CD14-positive monocyte (primary cell): ENCODE measurements at regions of chr9 and their contacts with region 1.

Region 1: DNA sequence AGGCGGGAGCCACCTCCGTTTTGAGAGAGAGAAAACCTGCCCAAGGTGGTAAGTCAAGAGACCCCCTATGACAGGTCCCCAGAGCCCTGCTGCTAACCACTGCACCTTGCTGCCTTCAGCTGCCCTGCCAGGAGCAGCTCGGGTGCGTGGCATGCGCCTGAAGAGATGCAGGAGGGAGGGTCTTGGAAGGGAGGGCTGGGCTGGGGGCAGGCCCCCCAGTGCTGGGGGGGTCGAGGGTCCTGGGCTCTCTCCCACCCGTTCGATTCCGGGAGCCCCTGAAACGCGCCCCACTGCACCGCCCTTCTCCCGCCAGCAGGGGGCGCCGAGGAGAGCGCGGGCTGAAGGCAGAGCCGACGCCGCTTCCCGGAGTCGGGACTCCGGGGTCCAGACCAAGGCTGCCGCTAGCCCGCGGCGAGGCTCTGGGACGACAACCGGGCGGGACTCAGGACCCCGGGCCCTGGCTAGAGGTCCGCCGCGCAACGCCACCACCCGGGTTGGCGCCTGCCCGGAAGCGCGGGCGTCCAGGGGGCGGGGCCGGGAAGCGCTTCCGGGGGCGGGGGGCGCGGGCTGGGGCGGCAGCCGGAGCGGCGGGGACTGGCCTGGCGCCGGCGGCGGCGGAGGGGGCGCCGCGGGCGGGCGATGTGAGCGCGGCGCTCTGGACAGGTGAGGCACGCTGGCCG is at the start of gene ZBTB34:
- DNase-seq: peak; percentile 45 to 57 (median 48)
- H3K4me3 ChIP-seq: peak within 1 kb of the TSS; percentile 86 to 93 (median 87)
- H3K4me3 Mint-ChIP-seq: peak within 1 kb of the TSS; percentile 89 to 99
- H3K27ac ChIP-seq: peak within 1 kb of the TSS; percentile 46 to 82
- H3K27ac Mint-ChIP-seq: peak within 1 kb of the TSS; percentile 88 to 97 (median 92)
- H3K4me1 ChIP-seq: peaks cover 37 to 40% of the 10 kb centered on the region in 2 donors
- H3K4me1 Mint-ChIP-seq: peaks cover 38% of the 10 kb centered on the region
- H3K27me3 ChIP-seq: no peaks in the 10 kb centered on the region
- H3K27me3 Mint-ChIP-seq: peaks cover 0 to 1% (median 0%) of the 10 kb centered on the region in 3 donors
- CTCF ChIP-seq: peak; percentile 100
- polyA plus RNA-seq, gene ZBTB34: 3.2 to 15.3 (median 3.6) TPM

Region 2: GRCh38 chr9:126804696-126805545 is 55.3 kb before region 1 on chr9 and contains the start of gene ZBTB43:
- intact Hi-C with region 1: loop called in 1 of 2 experiments (anchors 5 kb)
- DNase-seq: peak; percentile 96 to 98 (median 97)
- H3K4me3 ChIP-seq: peak within 1 kb of the TSS; percentile 84 to 89 (median 86)
- H3K4me3 Mint-ChIP-seq: peak within 1 kb of the TSS; percentile 98 to 99
- H3K27ac ChIP-seq: peak within 1 kb of the TSS; percentile 78 to 99
- H3K27ac Mint-ChIP-seq: peak within 1 kb of the TSS; percentile 99 to 100 (median 100)
- H3K4me1 ChIP-seq: peaks cover 23 to 41% of the 10 kb centered on the region in 2 donors
- H3K4me1 Mint-ChIP-seq: peaks cover 37% of the 10 kb centered on the region
- H3K27me3 ChIP-seq: no peaks in the 10 kb centered on the region
- H3K27me3 Mint-ChIP-seq: peaks cover 1 to 5% (median 2%) of the 10 kb centered on the region in 3 donors
- CTCF ChIP-seq: no peak
- polyA plus RNA-seq, gene ZBTB43: 6.1 to 15.9 (median 6.8) TPM

Region 3: GRCh38 chr9:126914458-126915280 is 54.5 kb after region 1 on chr9 and contains the start of gene RALGPS1:
- intact Hi-C with region 1: loop called in 1 of 2 experiments (anchors 5 kb)
- DNase-seq: peak; percentile 91 to 92 (median 92)
- H3K4me3 ChIP-seq: peak within 1 kb of the TSS in 2 of 3 experiments; percentile 31 to 68
- H3K4me3 Mint-ChIP-seq: peak within 1 kb of the TSS; percentile 57 to 85
- H3K27ac ChIP-seq: no peak within 1 kb of the TSS
- H3K27ac Mint-ChIP-seq: peak within 1 kb of the TSS in 1 of 7 donors; percentile 30
- H3K4me1 ChIP-seq: peaks cover 7 to 10% of the 10 kb centered on the region in 2 donors
- H3K4me1 Mint-ChIP-seq: peaks cover 11% of the 10 kb centered on the region
- H3K27me3 ChIP-seq: peaks cover 9 to 20% of the 10 kb centered on the region in 2 donors
- H3K27me3 Mint-ChIP-seq: peaks cover 26 to 48% (median 35%) of the 10 kb centered on the region in 3 donors
- CTCF ChIP-seq: no peak
- polyA plus RNA-seq, gene RALGPS1: 0.60 to 4.6 (median 1.3) TPM